ENCODE measurements at regions of chr12 and their contacts with region 1.

Region 1: DNA sequence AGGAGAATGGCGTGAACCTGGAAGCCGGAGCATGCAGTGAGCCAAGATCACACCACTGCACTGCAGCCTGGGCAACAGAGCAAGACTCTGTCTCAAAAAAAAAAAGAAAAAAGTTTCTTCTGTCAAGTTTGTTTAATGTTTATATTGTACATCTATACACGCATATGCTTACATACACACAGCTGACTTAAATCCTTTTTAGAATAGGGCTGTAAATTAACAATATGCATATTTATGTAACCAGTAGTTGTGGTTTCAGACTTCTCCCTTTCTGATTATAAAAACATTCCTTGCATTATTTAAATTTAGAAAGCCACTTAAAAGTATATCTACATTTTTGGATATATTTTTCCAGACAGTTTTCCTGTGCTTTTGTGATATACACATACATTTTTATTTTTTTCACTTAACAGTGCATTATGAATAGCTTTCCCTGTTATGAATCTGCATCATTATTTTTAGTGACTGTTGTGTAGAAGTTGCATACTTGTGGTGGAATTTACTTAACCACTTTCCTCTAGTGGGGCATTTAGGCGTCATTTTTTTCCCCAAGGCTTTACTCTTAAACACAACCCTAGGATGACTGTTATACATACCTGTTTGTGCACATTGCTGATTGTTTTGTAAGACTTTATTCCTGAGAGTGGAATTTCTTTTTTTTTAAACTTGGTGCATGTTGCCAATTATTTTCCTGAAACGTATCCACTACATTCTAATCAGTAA is 29.4 kb downstream of the POLR3B start:
- DNase-seq: no peak
- H3K4me3 ChIP-seq: no peak overlapping the region
- H3K4me1 ChIP-seq: no peaks in the 10 kb centered on the region
- H3K27me3 ChIP-seq: no peaks in the 10 kb centered on the region

Region 2: DNA sequence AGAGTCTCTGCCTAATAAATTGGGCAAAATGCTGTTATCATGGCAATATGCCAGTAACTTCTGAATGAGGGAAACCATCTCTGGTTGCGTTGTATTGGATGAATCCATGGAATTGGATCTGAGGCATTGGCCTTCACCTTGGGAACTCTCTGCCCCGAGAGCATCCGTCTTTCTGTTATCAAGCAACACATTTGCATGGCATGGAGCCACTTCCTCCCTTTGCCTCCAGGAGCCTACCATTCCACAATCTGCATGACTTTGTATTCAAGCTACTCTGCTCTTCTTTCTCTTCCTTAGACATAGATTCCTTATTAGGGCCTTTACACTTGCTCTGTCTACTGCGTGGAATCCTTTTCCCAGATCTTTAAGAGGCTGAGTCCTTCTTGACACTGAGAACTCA is 444.7 kb after region 1 on chr12:
- in situ Hi-C with region 1: loop called (anchors 10 kb)
- DNase-seq: no peak
- H3K4me3 ChIP-seq: no peak overlapping the region
- H3K4me1 ChIP-seq: no peaks in the 10 kb centered on the region; the same call in 1 of the 2 replicates
- H3K27me3 ChIP-seq: no peaks in the 10 kb centered on the region

Region 3: DNA sequence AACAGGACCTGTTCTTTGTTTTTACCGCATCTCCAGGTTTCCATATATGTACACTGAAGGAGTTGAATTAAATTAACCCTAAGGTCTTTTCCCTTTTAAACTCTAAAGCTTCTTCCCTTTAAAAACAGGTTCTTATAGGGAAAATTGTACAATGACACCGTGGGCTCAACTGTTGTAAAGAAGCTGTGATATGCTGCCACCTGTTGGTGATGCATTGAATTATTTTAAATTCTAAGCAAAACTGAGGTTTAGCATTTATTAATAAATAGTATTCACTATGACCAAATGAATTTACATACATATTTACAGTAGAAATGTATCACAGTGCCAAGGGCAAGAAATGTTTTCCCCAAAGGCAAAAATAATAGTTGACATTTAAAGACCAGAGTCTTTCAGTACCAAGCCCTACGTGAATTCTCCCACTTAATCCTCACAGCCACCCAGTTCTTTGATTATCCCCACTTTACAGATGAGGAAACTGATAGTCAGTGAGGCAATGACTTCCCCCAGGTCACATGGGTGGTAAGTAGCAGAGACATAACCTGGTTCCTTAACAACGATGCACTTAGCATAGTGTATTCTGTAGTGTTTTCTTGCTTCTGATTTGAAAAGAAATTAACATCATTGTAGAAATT is 533.1 kb after region 1 on chr12:
- in situ Hi-C with region 1: loop called (anchors 5 kb)
- DNase-seq: peak; percentile 36 to 50
- H3K4me3 ChIP-seq: no peak overlapping the region
- H3K4me1 ChIP-seq: peaks cover 9% of the 10 kb centered on the region; the same call in 1 of the 2 replicates
- H3K27me3 ChIP-seq: no peaks in the 10 kb centered on the region

Measured in HAP-1 (cell line).